Activated CD8-positive, alpha-beta T cell treated with anti-CD3 and anti-CD28 coated beads for 36 hours (primary cell): ENCODE measurements at regions of chr12 and their contacts with region 1.

Region 1: GRCh38 chr12:39619660-39620433 is at the start of gene ABCD2:
- DNase-seq: peak; percentile 85
- ATAC-seq: peak; percentile 72
- H3K4me3 Mint-ChIP-seq: no peak within 1 kb of the TSS
- H3K27ac Mint-ChIP-seq: no peak within 1 kb of the TSS
- H3K4me1 Mint-ChIP-seq: peaks cover 37% of the 10 kb centered on the region
- H3K27me3 Mint-ChIP-seq: no peaks in the 10 kb centered on the region
- CTCF ChIP-seq: no peak
- total RNA-seq, gene ABCD2: 3.8 to 4.0 TPM

Region 2: DNA sequence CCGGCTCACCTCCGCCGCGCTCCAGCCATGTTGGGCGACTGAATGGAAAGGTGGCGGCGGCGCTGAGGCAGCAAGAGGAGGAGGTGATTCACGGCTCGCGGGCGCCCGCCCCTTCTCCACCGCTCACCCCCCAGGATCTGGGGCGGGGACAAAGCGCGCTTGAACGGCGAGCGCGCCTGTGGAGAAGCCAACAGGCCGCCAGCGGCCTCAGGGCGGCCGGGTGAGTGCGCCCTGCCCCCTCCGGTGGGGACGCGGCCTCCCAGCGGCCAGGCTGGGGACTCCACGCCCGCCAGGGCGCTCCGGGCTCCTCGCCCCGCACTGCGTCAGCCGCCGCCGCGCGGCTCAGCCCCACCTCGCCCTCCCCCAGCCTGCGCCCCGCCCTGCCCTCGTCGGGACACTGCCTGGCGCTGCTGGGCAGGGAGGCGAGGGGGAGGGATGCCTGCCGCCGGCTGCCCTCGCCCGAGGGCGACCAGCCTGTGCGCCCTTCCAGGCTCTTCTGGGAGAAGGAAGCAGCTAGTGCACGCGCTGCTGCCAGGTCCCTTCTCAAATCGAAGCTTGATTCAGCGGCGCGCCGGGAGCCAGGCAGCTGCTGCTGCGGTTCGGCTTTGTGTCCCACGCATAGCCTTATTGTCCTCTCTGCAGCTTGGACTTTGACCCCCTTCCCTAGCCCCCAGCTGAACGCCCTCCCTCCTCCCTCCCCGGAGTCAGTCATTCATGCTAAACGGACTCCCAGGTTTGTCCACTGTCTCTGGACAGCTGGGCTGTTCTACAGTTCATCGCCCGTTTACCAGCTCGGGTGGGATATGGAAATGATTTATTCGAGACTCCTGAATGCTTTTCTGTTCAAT is 176.5 kb before region 1 on chr12 and contains the start of gene KIF21A:
- CTCF ChIA-PET with region 1: interaction called, 5 read pairs
- POLR2A ChIA-PET with region 1: no interaction called
- intact Hi-C with region 1: loop called (anchors 2 kb)
- DNase-seq: peak; percentile 91
- ATAC-seq: peak; percentile 95
- H3K4me3 Mint-ChIP-seq: peak within 1 kb of the TSS; percentile 89
- H3K27ac Mint-ChIP-seq: peak within 1 kb of the TSS; percentile 94
- H3K4me1 Mint-ChIP-seq: peaks cover 20% of the 10 kb centered on the region
- H3K27me3 Mint-ChIP-seq: peaks cover 4% of the 10 kb centered on the region
- CTCF ChIP-seq: peak; percentile 67
- total RNA-seq, gene KIF21A: 18.0 to 20.0 TPM

Region 3: GRCh38 chr12:39682689-39683477 is 63.0 kb after region 1 on chr12:
- CTCF ChIA-PET with region 1: interaction called, 3 read pairs
- POLR2A ChIA-PET with region 1: interaction called, 3 read pairs
- intact Hi-C with region 1: loop called (anchors 5 kb)
- DNase-seq: no peak
- ATAC-seq: peak; percentile 75
- H3K4me3 Mint-ChIP-seq: peak overlapping the region; percentile 74
- H3K27ac Mint-ChIP-seq: peak overlapping the region; percentile 88
- H3K4me1 Mint-ChIP-seq: peaks cover 29% of the 10 kb centered on the region
- H3K27me3 Mint-ChIP-seq: no peaks in the 10 kb centered on the region
- CTCF ChIP-seq: no peak